Activated CD4-positive, alpha-beta T cell treated with anti-CD3 and anti-CD28 coated beads for 36 hours (primary cell): ENCODE measurements at regions of chr7 and their contacts with region 1.

Region 1: DNA sequence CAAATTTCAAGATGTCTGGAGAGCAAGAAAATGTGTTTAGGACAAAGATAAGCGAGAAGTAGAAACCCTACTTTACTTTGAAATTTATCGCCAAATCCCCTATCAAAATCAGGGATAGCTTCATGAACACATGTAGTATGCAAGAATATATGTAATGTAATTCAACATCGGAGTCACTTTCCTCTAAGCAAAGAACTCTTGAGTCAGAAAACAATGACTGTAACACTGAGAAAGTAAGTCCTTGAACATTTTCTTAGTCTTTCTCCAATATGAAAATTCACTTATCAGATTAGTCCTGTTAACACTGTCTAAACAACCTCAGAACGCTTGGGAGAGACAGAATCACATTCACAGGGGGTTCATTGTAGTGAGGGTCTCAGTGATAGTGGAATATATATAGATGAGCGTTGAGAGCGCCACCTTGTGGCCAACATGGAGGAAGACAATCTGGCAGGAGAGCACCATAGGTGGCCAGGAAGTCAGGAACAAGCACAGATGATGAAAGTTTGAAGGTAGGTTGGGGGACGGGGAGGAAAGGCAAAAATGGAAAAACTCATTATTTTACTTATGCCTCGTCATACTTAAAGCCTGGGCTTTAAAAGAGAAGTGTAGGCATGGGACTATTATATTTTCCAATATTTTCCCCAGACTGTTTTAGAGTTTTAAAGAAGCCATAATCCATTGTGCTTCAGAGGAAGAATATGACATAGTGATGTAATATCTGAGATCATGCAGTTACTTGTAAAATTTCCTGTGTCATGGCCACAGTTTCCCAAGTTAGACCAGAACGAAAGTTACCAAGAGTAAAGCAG is 115.5 kb upstream of the GNAI1 start:
- DNase-seq: peak; percentile 64
- ATAC-seq: peak; percentile 80
- H3K4me3 Mint-ChIP-seq: no peak overlapping the region
- H3K27ac Mint-ChIP-seq: no peak overlapping the region
- H3K4me1 Mint-ChIP-seq: no peaks in the 10 kb centered on the region
- H3K27me3 Mint-ChIP-seq: no peaks in the 10 kb centered on the region

Region 2: GRCh38 chr7:79272066-79272669 is 747.0 kb before region 1 on chr7:
- CTCF ChIA-PET with region 1: no interaction called
- POLR2A ChIA-PET with region 1: no interaction called
- intact Hi-C with region 1: loop called (anchors 2 to 10 kb)
- DNase-seq: no peak
- ATAC-seq: no peak
- H3K4me3 Mint-ChIP-seq: no peak overlapping the region
- H3K27ac Mint-ChIP-seq: no peak overlapping the region
- H3K4me1 Mint-ChIP-seq: no peaks in the 10 kb centered on the region
- H3K27me3 Mint-ChIP-seq: peaks cover 3% of the 10 kb centered on the region